ENCODE measurements at regions of chr5 and their contacts with region 1.

Region 1: GRCh38 chr5:157917899-157918809 is 59.2 kb upstream of the CLINT1 start:
- DNase-seq: peak; percentile 50 to 75
- H3K4me3 ChIP-seq: no peak overlapping the region
- H3K27ac ChIP-seq: no peak overlapping the region
- H3K4me1 ChIP-seq: peaks cover 0 to 10% (median 6%) of the 10 kb centered on the region in 4 experiments; a peak in 6 of 7 replicates
- H3K27me3 ChIP-seq: no peaks in the 10 kb centered on the region
- CTCF ChIP-seq: peak; percentile 57 to 83 (median 74)
- EP300 ChIP-seq: no peak
- POLR2A ChIP-seq: no peak
- RAD21 ChIP-seq: peak; percentile 73 to 80

Region 2: GRCh38 chr5:157820593-157821252 is 97.4 kb before region 1 on chr5:
- CTCF ChIA-PET with region 1: interaction called, 11 read pairs
- POLR2A ChIA-PET with region 1: no interaction called
- DNase-seq: no peak
- H3K4me3 ChIP-seq: no peak overlapping the region
- H3K27ac ChIP-seq: no peak overlapping the region
- H3K4me1 ChIP-seq: peaks cover 0 to 2% (median 0%) of the 10 kb centered on the region in 4 experiments; a peak in 2 of 7 replicates
- H3K27me3 ChIP-seq: no peaks in the 10 kb centered on the region
- CTCF ChIP-seq: peak in 2 of 3 experiments; percentile 7 to 35; a peak in 2 of 4 replicates
- EP300 ChIP-seq: no peak
- POLR2A ChIP-seq: no peak
- RAD21 ChIP-seq: peak; percentile 26 to 31; a peak in 3 of 4 replicates

Region 3: DNA sequence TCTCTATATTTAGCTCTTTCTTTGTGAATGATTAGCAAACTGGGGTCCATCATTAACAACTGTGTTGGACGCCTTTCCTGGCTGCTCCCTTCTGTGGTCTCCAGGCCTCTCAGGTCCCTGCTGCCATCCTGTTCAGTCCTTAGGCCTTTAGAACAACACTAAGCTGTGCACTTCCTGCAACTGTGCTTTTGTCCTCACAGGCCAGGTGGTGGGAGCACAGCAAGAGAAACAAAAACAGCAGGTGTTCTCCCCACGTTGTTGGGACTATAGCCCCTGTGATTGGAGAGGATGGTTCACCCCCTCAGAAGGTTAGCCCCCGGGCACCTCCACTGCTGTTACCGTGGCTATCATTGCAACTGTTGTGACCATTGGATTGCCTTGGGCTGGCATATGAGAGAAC is 17.5 kb before region 1 on chr5:
- CTCF ChIA-PET with region 1: interaction called, 27 read pairs
- POLR2A ChIA-PET with region 1: no interaction called
- DNase-seq: no peak
- H3K4me3 ChIP-seq: no peak overlapping the region
- H3K27ac ChIP-seq: no peak overlapping the region
- H3K4me1 ChIP-seq: peaks cover 0 to 3% (median 2%) of the 10 kb centered on the region in 4 experiments; a peak in 2 of 7 replicates
- H3K27me3 ChIP-seq: no peaks in the 10 kb centered on the region
- CTCF ChIP-seq: no peak
- EP300 ChIP-seq: no peak
- POLR2A ChIP-seq: no peak
- RAD21 ChIP-seq: no peak

Region 4: GRCh38 chr5:157930710-157931109 is 12.6 kb after region 1 on chr5:
- CTCF ChIA-PET with region 1: interaction called, 19 read pairs
- POLR2A ChIA-PET with region 1: interaction called, 5 read pairs
- DNase-seq: no peak
- H3K4me3 ChIP-seq: no peak overlapping the region
- H3K27ac ChIP-seq: no peak overlapping the region
- H3K4me1 ChIP-seq: peaks cover 2 to 10% (median 7%) of the 10 kb centered on the region in 4 experiments; a peak in 5 of 7 replicates
- H3K27me3 ChIP-seq: no peaks in the 10 kb centered on the region
- CTCF ChIP-seq: no peak
- EP300 ChIP-seq: no peak
- POLR2A ChIP-seq: no peak
- RAD21 ChIP-seq: no peak

Measured in H1 (cell line).